Gastrocnemius medialis (tissue), 4 donors: ENCODE measurements at regions of chr18 and their contacts with region 1.

Region 1: GRCh38 chr18:79951578-79952455 is at the start of gene SLC66A2:
- DNase-seq: peak; percentile 81 to 85
- ATAC-seq: peak; percentile 68 to 80
- H3K4me3 ChIP-seq: peak within 1 kb of the TSS; percentile 75 to 97 (median 92)
- H3K27ac ChIP-seq: peak within 1 kb of the TSS; percentile 88 to 96 (median 92)
- H3K4me1 ChIP-seq: peaks cover 28 to 41% of the 10 kb centered on the region in 2 donors
- H3K27me3 ChIP-seq: no peaks in the 10 kb centered on the region
- CTCF ChIP-seq: peak in 2 of 5 experiments; percentile 4 to 17
- POLR2A ChIP-seq: peak; percentile 93 to 95
- total RNA-seq, gene SLC66A2: 43.3 to 121 (median 107) TPM

Region 2: GRCh38 chr18:79400091-79400590 is 551.7 kb before region 1 on chr18:
- in situ Hi-C with region 1: no loop called
- intact Hi-C with region 1: loop called (anchors 10 kb)
- DNase-seq: peak; percentile 62 to 78
- ATAC-seq: peak; percentile 15
- H3K4me3 ChIP-seq: peak overlapping the region; percentile 70 to 95 (median 79)
- H3K27ac ChIP-seq: peak overlapping the region; percentile 88 to 99 (median 94)
- H3K4me1 ChIP-seq: peaks cover 47 to 60% of the 10 kb centered on the region in 2 donors
- H3K27me3 ChIP-seq: no peaks in the 10 kb centered on the region
- CTCF ChIP-seq: no peak
- POLR2A ChIP-seq: peak; percentile 56 to 57

Region 3: GRCh38 chr18:79898916-79899608 is 52.8 kb before region 1 on chr18:
- in situ Hi-C with region 1: no loop called
- intact Hi-C with region 1: no loop called
- DNase-seq: peak in 1 of 2 donors; percentile 8
- ATAC-seq: no peak
- H3K4me3 ChIP-seq: no peak overlapping the region
- H3K27ac ChIP-seq: no peak overlapping the region
- H3K4me1 ChIP-seq: no peaks in the 10 kb centered on the region
- H3K27me3 ChIP-seq: no peaks in the 10 kb centered on the region
- CTCF ChIP-seq: no peak
- POLR2A ChIP-seq: no peak

Region 4: DNA sequence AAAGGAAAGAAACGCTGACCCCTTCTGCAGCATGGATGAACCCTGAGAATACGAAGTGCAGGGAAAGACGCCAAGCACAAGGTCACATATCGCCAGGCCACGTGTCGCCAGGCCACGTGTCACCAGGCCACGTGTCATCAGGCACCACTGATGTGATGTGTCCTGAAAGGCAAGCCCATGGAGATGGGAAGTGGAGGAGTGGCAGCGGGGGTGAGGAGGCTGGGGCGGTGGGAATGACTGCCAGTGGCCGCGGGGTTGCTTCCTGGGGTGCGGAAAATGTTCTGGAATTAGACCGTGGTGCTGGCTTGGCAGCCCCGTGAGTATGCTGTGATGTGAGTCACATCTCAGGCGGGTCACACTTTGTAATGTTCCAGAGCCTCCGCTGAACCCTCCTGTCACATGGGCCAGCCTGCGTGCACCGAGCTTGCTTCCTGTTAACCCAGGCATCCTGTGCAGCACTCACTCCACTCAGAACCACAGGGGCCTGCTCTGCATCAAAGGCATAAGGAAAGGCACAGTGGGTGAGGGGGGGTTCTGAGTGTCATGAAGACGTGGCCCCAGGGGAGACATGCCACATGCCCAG is 39.3 kb before region 1 on chr18:
- in situ Hi-C with region 1: no loop called
- intact Hi-C with region 1: loop called (anchors 5 kb)
- DNase-seq: peak; percentile 64 to 82
- ATAC-seq: peak; percentile 77 to 92
- H3K4me3 ChIP-seq: no peak overlapping the region
- H3K27ac ChIP-seq: peak overlapping the region; percentile 43 to 85 (median 61)
- H3K4me1 ChIP-seq: peaks cover 21 to 23% of the 10 kb centered on the region in 2 donors
- H3K27me3 ChIP-seq: no peaks in the 10 kb centered on the region
- CTCF ChIP-seq: no peak
- POLR2A ChIP-seq: no peak

Region 5: DNA sequence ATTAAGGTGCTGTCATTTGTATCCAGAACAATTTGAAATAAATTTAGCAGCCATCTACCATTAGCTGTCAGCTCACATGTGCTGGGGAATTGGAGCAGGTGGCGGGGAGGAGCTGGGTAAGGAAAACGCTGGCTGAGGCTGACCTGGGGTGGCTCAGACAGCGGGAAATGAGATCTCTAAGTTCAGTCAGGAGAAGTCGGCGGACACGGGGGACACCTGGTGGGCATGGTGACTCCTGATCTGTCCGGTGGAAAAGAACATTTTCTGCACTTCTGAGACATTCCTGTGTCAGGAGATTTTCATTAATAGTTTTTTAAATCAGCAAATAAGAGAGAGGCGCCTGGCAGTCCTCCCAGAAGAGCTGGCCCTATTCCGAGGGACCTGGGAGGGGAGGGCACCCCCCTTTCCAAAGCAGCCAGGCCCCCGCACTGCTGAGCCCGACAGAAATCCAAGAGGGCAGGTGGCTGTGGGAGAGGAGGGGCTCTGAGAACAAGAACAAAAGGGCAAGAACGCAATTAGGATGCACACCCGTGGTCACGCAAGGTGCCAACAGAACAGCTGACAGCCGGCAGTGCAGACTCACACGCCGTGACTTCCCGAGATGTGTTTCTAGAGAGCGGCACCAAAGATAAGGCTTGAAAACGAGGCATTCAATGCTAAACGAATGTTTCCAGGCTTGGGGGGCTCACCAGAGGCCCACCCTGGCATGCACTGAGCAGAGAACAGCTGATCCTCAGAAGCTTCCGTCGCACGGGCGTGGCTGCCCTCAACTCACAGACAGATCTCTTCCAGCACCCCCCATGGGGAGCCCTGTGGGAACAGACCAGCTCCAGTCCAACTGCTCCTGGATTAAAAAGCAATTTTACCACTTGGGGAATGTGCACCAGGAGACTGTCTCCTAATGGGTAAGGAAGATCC is 26.7 kb before region 1 on chr18:
- in situ Hi-C with region 1: no loop called
- intact Hi-C with region 1: loop called (anchors 1 kb)
- DNase-seq: peak; percentile 80 to 87
- ATAC-seq: peak; percentile 87 to 91
- H3K4me3 ChIP-seq: peak overlapping the region in 2 of 4 donors; percentile 33 to 37
- H3K27ac ChIP-seq: peak overlapping the region; percentile 84 to 92 (median 86)
- H3K4me1 ChIP-seq: peaks cover 37 to 49% of the 10 kb centered on the region in 2 donors
- H3K27me3 ChIP-seq: no peaks in the 10 kb centered on the region
- CTCF ChIP-seq: peak; percentile 12 to 36 (median 27)
- POLR2A ChIP-seq: peak in 1 of 2 donors; percentile 23

Region 6: DNA sequence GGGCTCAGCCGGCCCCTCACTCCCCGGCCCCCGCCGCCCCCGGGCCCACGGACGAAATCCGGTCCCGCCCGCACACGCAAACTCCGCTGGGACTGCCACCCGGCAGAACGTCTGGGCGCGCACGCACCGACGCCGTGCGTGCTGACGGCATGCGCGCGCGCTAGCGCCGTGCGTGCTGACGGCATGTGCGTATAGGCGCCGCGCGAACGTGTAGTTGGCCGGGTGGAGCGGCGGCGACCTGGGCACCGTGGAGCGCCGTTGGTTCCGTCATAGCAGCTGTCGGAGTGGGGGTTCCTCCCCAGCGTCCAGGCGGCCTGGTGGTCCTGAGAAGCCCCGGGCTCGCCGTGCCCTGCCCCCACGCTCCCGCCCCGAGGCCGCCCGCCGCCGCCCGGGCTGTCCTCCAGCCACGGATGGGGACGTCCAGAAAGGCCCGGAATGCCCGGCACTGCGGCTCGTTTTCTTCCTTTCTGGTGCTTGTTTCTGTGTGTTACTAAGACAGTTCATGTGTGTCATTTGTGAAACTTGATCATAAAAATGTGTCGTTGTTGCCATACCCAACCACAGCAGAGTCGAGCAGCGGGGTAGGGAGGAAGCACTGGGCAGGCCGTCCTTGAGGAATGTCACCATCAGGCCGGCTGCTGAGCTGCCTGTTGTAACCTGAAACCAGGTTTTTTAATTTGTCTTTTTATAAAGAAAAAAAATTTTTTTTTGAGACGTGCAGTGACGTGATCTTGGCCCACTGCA is 36.8 kb after region 1 on chr18 and contains the start of gene TXNL4A:
- in situ Hi-C with region 1: no loop called
- intact Hi-C with region 1: loop called (anchors 1 kb)
- DNase-seq: peak; percentile 70 to 84
- ATAC-seq: peak; percentile 96 to 98
- H3K4me3 ChIP-seq: peak within 1 kb of the TSS; percentile 84 to 99 (median 89)
- H3K27ac ChIP-seq: peak within 1 kb of the TSS; percentile 94 to 100 (median 96)
- H3K4me1 ChIP-seq: peaks cover 15 to 23% of the 10 kb centered on the region in 2 donors
- H3K27me3 ChIP-seq: no peaks in the 10 kb centered on the region
- CTCF ChIP-seq: no peak
- POLR2A ChIP-seq: peak; percentile 81 to 93
- total RNA-seq, gene TXNL4A: 39.9 to 105 (median 66.4) TPM